ENCODE measurements at regions of chr12 and their contacts with region 1.

Region 1: DNA sequence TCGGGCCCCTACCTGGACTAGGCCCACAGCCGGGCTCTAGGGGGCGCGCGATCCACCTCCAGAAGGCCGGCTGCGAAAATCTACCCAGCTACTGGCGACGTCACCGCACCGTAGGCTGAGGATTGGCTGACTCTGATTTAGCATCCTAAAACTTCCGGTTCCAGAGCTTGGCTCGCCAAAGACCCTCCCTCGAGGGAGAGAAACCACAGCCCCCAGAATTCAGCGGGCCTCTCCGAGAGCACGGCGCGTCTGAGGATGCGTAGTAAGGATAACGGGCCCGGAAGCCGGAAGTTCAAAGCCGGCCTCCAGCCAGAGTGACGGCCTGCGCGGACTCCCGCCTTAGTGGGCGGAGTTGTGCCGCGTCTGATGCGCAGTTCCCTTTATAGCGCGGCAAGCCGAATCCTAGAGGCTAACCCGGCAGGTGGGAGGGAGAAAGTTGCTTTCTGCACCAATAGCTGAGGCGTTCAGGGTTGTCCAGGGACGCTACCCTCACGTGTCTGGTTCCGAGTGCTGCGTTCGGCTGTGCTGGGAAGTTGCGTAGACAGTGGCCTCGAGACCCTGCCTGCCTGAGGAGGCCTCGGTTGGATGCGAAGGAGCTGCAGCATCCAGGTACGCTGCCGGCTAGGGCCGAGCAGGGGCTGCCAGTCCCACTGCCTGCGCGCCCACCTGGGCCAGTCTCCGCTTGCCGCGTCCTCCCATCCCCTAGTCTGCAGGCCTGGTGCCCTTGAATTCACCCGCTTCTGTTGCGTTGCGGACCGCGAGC is at the start of gene COX14:
- DNase-seq: peak; percentile 98 to 100 (median 99)
- H3K4me3 ChIP-seq: peak within 1 kb of the TSS; percentile 72 to 100 (median 96)
- H3K27ac ChIP-seq: peak within 1 kb of the TSS; percentile 65 to 97 (median 92)
- H3K27me3 ChIP-seq: no peaks in the 10 kb centered on the region
- CTCF ChIP-seq: peak in 55 of 56 donors; percentile 66 to 100 (median 91)
- total RNA-seq, gene COX14: 34.1 to 74.3 (median 53.9) TPM

Region 2: DNA sequence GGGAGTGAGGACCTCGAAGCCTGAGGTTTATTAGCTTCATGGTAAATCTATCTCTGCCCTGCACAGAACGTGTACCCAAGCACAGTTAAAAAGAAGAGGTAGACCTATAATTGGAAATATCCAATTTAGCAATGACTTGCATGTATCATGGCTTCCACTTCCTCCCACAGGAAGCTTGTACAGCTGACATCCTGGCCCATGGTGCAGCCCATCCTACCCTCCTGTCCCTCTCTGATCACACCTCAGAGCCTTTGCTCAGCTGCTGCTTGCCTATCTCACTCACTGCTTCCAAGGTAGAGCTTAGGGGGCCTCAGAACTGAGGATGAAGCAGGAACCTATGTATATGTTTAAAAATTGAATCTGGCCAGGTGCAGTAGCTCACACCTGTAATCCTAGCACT is 264.7 kb before region 1 on chr12:
- intact Hi-C with region 1: no loop called
- DNase-seq: no peak
- H3K4me3 ChIP-seq: no peak overlapping the region
- H3K27ac ChIP-seq: no peak overlapping the region
- H3K27me3 ChIP-seq: peaks cover 0 to 5% (median 0%) of the 10 kb centered on the region in 45 donors
- CTCF ChIP-seq: no peak

Region 3: GRCh38 chr12:49983892-49984291 is 128.0 kb before region 1 on chr12:
- intact Hi-C with region 1: no loop called
- DNase-seq: peak in 1 of 10 donors; percentile 41
- H3K4me3 ChIP-seq: peak overlapping the region in 9 of 59 donors; percentile 1 to 34 (median 13)
- H3K27ac ChIP-seq: peak overlapping the region in 31 of 59 donors; percentile 1 to 71 (median 19)
- H3K27me3 ChIP-seq: no peaks in the 10 kb centered on the region
- CTCF ChIP-seq: no peak

Region 4: DNA sequence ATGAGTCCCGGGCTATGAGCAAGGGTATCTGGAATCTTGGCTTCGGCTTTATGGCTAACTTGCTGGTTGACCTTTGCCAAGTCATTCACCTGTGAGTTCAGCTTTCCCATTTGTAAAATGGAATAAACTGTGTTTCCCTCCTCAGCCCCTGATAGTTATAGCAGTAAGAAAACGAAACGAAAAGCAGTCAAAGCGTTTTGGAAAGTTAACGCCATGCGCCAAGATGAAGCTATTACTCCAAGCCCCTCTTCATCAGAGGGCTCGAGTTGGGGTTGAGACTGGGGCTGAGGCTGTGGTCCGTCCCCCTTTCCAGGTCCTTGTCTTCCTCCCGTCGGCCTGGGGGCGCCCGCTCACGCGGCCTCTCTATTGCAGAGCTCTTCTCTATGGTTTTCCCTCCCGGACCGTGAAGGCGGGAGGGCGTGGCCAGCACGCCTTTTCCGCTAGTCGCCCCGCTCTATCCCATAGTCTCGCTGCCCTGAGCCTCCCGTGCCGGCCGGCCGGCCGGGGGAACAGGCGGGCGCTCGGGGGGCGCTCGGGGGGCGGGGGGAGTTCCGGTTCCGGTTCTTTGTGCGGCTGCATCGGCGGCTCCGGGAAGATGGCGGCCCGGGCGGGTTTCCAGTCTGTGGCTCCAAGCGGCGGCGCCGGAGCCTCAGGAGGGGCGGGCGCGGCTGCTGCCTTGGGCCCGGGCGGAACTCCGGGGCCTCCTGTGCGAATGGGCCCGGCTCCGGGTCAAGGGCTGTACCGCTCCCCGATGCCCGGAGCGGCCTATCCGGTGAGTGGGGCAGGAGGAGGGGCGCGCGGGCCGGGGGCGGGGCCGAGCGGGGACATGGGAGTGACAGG is 26.9 kb before region 1 on chr12 and contains the start of gene SMARCD1:
- intact Hi-C with region 1: loop called in 1 of 2 experiments (anchors 1 kb)
- DNase-seq: peak; percentile 90 to 96 (median 94)
- H3K4me3 ChIP-seq: peak within 1 kb of the TSS; percentile 66 to 96 (median 86)
- H3K27ac ChIP-seq: peak within 1 kb of the TSS; percentile 79 to 98 (median 95)
- H3K27me3 ChIP-seq: no peaks in the 10 kb centered on the region
- CTCF ChIP-seq: peak; percentile 36 to 87 (median 72)
- total RNA-seq, gene SMARCD1: 30.8 to 66.7 (median 44.2) TPM

Region 5: GRCh38 chr12:50338920-50339645 is 227.2 kb after region 1 on chr12:
- intact Hi-C with region 1: no loop called
- DNase-seq: no peak
- H3K4me3 ChIP-seq: no peak overlapping the region
- H3K27ac ChIP-seq: no peak overlapping the region
- H3K27me3 ChIP-seq: no peaks in the 10 kb centered on the region
- CTCF ChIP-seq: no peak

Region 6: GRCh38 chr12:50614167-50614759 is 502.4 kb after region 1 on chr12:
- intact Hi-C with region 1: no loop called
- DNase-seq: peak in 1 of 10 donors; percentile 36
- H3K4me3 ChIP-seq: peak overlapping the region in 1 of 59 donors; percentile 10
- H3K27ac ChIP-seq: peak overlapping the region in 51 of 59 donors; percentile 0 to 80 (median 62)
- H3K27me3 ChIP-seq: no peaks in the 10 kb centered on the region
- CTCF ChIP-seq: no peak

Measured in dorsolateral prefrontal cortex (tissue), 120 donors.